Heart left ventricle (tissue), 16 donors: ENCODE measurements at regions of chr12 and their contacts with region 1.

Region 1: GRCh38 chr12:116599285-116600136 is 40.3 kb downstream of the MAP1LC3B2 start:
- DNase-seq: peak; percentile 81 to 90 (median 83)
- ATAC-seq: peak; percentile 78 to 90 (median 89)
- H3K4me3 ChIP-seq: peak overlapping the region in 10 of 12 donors; percentile 23 to 55 (median 42)
- H3K27ac ChIP-seq: peak overlapping the region; percentile 64 to 89 (median 77)
- H3K4me1 ChIP-seq: peaks cover 0 to 42% (median 17%) of the 10 kb centered on the region in 12 donors
- H3K27me3 ChIP-seq: no peaks in the 10 kb centered on the region
- CTCF ChIP-seq: peak; percentile 47 to 84 (median 74)
- POLR2A ChIP-seq: no peak

Region 2: DNA sequence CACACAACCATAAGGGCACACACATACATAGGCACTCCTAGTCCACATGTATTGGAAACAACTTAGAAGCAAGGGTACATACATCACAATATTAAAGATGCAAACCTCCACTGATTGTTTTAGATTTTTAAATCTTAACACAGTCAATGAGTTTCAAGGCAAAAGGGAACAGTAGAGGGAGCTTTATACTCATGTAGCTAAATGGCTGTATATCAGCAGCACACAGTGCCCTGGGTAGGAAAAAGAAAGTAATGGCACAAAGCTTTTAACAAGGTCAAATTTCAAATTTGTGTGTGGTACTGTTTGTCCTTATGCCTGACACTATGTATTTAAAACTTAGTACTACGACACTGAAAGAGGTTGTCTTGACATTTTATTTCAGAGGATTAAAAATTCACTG is 584.0 kb before region 1 on chr12:
- intact Hi-C with region 1: loop called in 3 of 10 experiments (anchors 1 to 5 kb)
- DNase-seq: no peak
- ATAC-seq: peak; percentile 62 to 86 (median 78)
- H3K4me3 ChIP-seq: no peak overlapping the region
- H3K27ac ChIP-seq: no peak overlapping the region
- H3K4me1 ChIP-seq: peaks cover 0 to 16% (median 10%) of the 10 kb centered on the region in 12 donors
- H3K27me3 ChIP-seq: no peaks in the 10 kb centered on the region
- CTCF ChIP-seq: peak; percentile 20 to 78 (median 58)
- POLR2A ChIP-seq: no peak

Region 3: GRCh38 chr12:116152268-116152667 is 447.2 kb before region 1 on chr12:
- intact Hi-C with region 1: loop called in 5 of 10 experiments (anchors 5 to 10 kb)
- DNase-seq: no peak
- ATAC-seq: no peak
- H3K4me3 ChIP-seq: no peak overlapping the region
- H3K27ac ChIP-seq: no peak overlapping the region
- H3K4me1 ChIP-seq: peaks cover 0 to 73% (median 44%) of the 10 kb centered on the region in 12 donors
- H3K27me3 ChIP-seq: no peaks in the 10 kb centered on the region
- CTCF ChIP-seq: no peak
- POLR2A ChIP-seq: no peak

Region 4: DNA sequence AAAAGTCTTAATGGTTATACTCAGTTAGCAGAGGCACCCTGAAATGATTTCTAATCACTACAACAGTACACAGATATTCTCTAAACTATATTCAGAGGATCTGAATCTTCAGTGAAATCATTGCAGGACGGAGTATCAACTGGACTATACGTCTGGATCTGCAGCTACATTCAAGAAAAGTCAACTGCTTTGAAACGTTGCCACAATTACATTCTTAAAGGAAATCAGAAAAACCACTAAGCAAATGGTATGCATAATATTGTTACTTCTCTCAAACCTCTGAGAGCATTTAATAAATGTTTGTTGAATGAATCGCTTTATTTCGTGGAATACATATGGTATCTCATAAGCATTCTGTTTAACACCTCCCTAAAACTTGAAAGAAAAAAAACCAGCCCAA is 389.4 kb before region 1 on chr12:
- intact Hi-C with region 1: no loop called
- DNase-seq: no peak
- ATAC-seq: no peak
- H3K4me3 ChIP-seq: no peak overlapping the region
- H3K27ac ChIP-seq: no peak overlapping the region
- H3K4me1 ChIP-seq: peaks cover 4 to 65% (median 42%) of the 10 kb centered on the region in 12 donors
- H3K27me3 ChIP-seq: no peaks in the 10 kb centered on the region
- CTCF ChIP-seq: no peak
- POLR2A ChIP-seq: no peak

Region 5: DNA sequence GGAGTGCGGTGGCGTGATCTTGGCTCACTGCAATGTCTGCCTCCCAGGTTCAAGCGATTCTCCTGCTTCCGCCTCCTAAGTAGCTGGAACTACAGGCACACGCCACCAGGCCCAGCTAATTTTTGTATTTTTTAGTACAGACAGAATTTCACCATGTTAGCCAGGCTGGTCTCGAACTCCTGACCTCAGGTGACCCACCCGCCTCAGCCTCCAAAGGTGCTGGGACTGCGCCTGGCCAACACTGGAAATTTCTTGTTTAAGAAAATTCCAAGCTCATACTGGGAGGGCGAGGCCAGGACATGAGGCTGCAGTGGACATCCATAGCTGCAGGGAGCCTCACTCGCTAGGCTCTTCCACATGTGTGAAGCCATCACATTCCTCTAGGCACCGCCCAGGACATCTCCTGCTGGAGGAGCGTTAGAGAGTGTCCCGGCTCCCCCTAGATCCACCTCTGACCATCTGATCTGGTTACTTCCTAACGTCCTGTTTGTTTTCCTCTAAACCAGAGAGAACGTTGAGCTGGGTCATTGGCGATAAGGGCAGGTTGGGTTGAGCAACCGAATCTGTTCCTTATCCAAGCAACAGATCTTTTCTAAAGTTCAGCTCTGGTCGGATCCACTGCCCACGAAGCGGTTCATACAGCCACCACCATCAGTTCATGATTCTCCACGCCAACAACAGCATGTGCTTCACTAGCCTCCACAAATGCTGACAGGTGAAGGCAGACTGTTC is 213.9 kb before region 1 on chr12:
- intact Hi-C with region 1: no loop called
- DNase-seq: no peak
- ATAC-seq: no peak
- H3K4me3 ChIP-seq: no peak overlapping the region
- H3K27ac ChIP-seq: no peak overlapping the region
- H3K4me1 ChIP-seq: peaks cover 0 to 42% (median 12%) of the 10 kb centered on the region in 12 donors
- H3K27me3 ChIP-seq: peaks cover 0 to 13% (median 3%) of the 10 kb centered on the region in 9 donors
- CTCF ChIP-seq: no peak
- POLR2A ChIP-seq: no peak

Region 6: DNA sequence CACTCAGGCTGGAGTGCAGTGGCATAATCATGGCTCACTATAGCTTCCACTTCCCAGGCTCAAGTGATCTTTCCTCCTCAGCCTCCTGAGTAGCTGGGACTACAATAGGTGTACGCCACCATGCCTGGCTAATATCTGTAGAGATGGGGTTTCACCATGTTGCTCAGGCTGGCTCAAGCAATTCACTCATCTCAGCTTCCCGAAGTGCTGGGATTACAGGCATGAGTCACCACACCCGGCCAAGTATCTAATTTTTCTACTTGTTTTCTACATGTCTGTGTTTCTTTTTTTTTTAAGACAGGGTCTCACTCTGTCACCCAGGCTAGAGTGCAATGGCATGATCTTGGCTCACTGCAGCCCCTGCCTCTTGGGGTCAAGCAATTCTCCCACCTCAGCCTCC is 202.4 kb before region 1 on chr12:
- intact Hi-C with region 1: no loop called
- DNase-seq: no peak
- ATAC-seq: no peak
- H3K4me3 ChIP-seq: no peak overlapping the region
- H3K27ac ChIP-seq: no peak overlapping the region
- H3K4me1 ChIP-seq: no peaks in the 10 kb centered on the region
- H3K27me3 ChIP-seq: no peaks in the 10 kb centered on the region
- CTCF ChIP-seq: no peak
- POLR2A ChIP-seq: no peak

Region 7: GRCh38 chr12:116455540-116456329 is 143.8 kb before region 1 on chr12:
- intact Hi-C with region 1: loop called in 2 of 10 experiments (anchors 2 to 5 kb)
- DNase-seq: peak; percentile 57 to 82 (median 81)
- ATAC-seq: peak; percentile 85 to 96 (median 92)
- H3K4me3 ChIP-seq: peak overlapping the region in 5 of 12 donors; percentile 5 to 38 (median 26)
- H3K27ac ChIP-seq: peak overlapping the region; percentile 47 to 96 (median 74)
- H3K4me1 ChIP-seq: peaks cover 0 to 24% (median 20%) of the 10 kb centered on the region in 12 donors
- H3K27me3 ChIP-seq: no peaks in the 10 kb centered on the region
- CTCF ChIP-seq: no peak
- POLR2A ChIP-seq: no peak

Region 8: DNA sequence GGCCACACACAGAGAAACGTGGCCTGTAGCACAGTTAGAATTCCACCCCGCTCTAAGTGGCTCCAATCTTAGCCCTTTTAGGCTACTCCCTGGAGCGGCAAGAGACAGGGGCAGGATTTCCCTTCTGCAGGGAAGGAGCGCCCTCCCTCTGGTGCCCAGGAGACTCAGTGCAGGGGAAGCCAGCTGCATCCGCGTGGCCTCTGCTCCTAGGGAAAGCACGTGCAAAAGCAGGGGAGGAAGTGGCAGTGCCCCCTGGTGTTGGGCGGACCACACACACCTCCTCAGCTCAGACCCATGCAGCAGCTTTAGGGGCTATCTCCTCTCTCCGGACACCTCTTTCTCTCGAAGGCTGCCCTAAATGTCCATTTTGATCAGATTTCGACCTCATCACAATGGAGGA is 88.4 kb after region 1 on chr12:
- intact Hi-C with region 1: loop called in 3 of 10 experiments (anchors 5 to 10 kb)
- DNase-seq: peak; percentile 47 to 76 (median 54)
- ATAC-seq: peak in 3 of 4 donors; percentile 60 to 85 (median 76)
- H3K4me3 ChIP-seq: no peak overlapping the region
- H3K27ac ChIP-seq: peak overlapping the region in 1 of 12 donors; percentile 12
- H3K4me1 ChIP-seq: peaks cover 0 to 6% (median 1%) of the 10 kb centered on the region in 12 donors
- H3K27me3 ChIP-seq: peaks cover 0 to 25% (median 0%) of the 10 kb centered on the region in 9 donors
- CTCF ChIP-seq: peak; percentile 31 to 66 (median 46)
- POLR2A ChIP-seq: no peak